ENCODE measurements at regions of chr2 and their contacts with region 1.

Region 1: GRCh38 chr2:150167711-150168110 is 319.8 kb downstream of the RND3 start:
- DNase-seq: no peak

Region 2: GRCh38 chr2:150327564-150328489 is 160.1 kb after region 1 on chr2:
- intact Hi-C with region 1: loop called (anchors 5 kb)
- DNase-seq: peak in 6 of 10 donors; percentile 13 to 65 (median 30)

Region 3: DNA sequence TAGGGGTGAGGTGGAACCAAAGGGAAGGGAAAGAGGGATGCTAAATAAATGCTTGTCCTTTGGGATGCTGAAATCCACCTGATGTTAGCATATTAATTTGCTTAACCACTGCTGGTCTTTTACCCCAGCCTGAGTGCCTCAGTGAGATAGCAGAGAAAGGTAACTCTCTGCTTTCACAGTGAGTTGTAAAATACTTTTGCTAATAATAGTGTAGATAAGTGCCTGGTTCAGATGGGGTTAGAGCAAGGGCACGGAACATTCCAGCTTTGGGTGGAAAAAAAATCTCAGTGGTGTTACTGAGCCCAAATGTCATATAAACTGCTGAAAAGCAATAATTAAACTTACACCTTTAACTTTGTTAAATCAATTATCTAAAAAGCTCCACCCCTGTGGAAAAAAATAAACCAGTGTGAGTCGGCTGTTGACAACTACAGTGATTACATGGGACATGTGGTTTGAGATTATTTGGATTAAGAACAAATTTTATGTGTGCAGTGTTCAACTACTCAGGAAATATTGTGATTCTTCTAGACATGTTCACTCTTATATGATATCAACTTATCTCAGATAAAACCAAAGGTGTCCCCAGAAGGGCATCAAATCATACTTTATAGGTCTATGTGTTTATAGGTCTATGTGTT is 340.9 kb after region 1 on chr2:
- intact Hi-C with region 1: no loop called
- DNase-seq: no peak

Measured in posterior cingulate gyrus (tissue), 11 donors.